HCT116 (cell line): ENCODE measurements at regions of chr20 and their contacts with region 1.

Region 1: DNA sequence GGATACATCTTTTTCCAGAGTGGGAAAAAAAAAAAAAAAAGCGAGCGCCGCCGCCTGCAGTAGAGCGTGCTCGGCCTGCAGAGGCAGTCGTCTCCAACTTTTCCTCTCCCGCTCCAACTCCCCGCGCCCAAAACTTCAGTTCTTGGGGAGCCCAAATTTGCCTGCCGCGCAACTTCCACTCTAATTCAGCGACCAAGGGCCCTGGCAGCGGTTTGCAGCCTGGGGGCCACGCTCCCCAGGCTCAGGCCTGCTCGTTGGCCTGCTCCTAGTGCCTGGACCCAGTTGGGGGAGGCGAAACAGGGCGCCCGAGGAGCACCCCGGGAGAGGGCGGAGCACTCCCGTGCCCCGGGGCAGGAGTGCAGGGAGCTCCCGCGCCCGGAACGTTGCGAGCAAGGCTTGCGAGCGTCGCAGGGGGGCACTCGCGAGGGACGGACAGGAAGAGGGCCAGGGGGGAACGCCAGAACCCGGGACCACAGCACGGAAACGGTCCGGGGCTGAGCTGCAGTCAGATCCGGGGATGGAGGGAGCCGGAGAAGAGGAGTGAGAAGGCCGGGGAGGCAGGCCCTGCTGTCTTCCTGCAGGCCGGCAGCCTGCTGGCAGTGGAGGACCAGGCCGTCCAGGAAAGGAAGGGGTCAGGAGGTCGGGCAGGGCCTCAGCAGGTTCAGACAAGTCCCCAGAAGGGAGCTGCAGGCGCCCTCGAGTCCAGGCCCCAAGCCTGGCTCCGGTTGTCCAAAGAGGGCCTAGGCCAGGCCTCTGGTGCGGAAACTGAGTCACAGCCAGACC is at the start of gene STX16:
- DNase-seq: peak; percentile 82
- ATAC-seq: peak; percentile 92
- H3K4me3 ChIP-seq: peak within 1 kb of the TSS; percentile 95 to 100
- H3K27ac ChIP-seq: peak within 1 kb of the TSS; percentile 77
- H3K4me1 ChIP-seq: peaks cover 3 to 12% of the 10 kb centered on the region in 2 experiments; a peak in 3 of 4 replicates
- H3K27me3 ChIP-seq: no peaks in the 10 kb centered on the region
- CTCF ChIP-seq: peak; percentile 52 to 76 (median 63)
- POLR2A ChIP-seq: no peak
- RAD21 ChIP-seq: peak; percentile 49
- total RNA-seq, gene STX16: 55.1 TPM

Region 2: GRCh38 chr20:58436868-58437645 is 213.9 kb before region 1 on chr20:
- CTCF ChIA-PET with region 1: no interaction called
- POLR2A ChIA-PET with region 1: no interaction called
- RAD21 ChIA-PET with region 1: no interaction called
- intact Hi-C with region 1: no loop called
- DNase-seq: no peak
- ATAC-seq: no peak
- H3K4me3 ChIP-seq: no peak overlapping the region
- H3K27ac ChIP-seq: no peak overlapping the region
- H3K4me1 ChIP-seq: no peaks in the 10 kb centered on the region
- H3K27me3 ChIP-seq: no peaks in the 10 kb centered on the region
- CTCF ChIP-seq: no peak
- POLR2A ChIP-seq: no peak
- RAD21 ChIP-seq: no peak

Region 3: GRCh38 chr20:58703264-58703663 is 52.3 kb after region 1 on chr20:
- CTCF ChIA-PET with region 1: no interaction called
- POLR2A ChIA-PET with region 1: no interaction called
- RAD21 ChIA-PET with region 1: no interaction called
- intact Hi-C with region 1: no loop called
- DNase-seq: no peak
- ATAC-seq: peak; percentile 55; the same call in 1 of the 2 replicates
- H3K4me3 ChIP-seq: no peak overlapping the region
- H3K27ac ChIP-seq: no peak overlapping the region
- H3K4me1 ChIP-seq: no peaks in the 10 kb centered on the region
- H3K27me3 ChIP-seq: no peaks in the 10 kb centered on the region
- CTCF ChIP-seq: peak in 2 of 3 experiments; percentile 59 to 60; a peak in 4 of 6 replicates
- POLR2A ChIP-seq: no peak
- RAD21 ChIP-seq: no peak

Region 4: DNA sequence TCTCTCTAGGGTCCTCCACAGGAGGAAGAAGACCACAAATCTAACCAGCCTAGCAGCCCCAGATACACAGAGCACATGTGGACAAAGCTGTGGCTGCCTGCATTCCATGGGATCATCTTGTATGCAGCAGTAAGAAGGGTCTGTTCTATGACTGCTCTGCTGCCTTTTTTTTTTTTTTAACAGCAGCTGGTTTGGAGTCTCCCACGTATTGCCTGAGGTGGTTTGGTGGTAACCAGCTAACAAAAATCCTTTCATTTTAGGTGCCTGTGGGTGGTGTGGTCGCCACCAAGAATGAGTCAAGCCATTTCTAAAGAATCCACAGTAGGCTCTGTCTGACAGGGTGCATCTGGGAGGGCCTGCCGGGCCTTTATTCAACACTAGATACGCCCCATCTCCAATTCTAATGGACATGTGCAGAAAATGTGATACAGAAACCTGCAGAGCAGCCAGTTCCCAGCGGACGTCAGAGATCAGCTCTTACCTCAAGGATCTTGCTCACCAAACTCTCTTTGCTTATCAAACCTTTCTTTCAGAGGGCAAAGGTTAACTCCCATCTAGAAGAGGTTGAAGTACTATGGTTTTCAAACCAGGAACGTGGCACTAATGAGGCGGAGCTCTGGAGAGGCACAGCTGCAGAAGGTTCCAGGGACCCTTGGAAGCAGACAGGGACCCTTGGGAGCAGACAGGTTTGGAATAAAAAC is 167.8 kb after region 1 on chr20:
- CTCF ChIA-PET with region 1: no interaction called
- POLR2A ChIA-PET with region 1: no interaction called
- RAD21 ChIA-PET with region 1: no interaction called
- intact Hi-C with region 1: no loop called
- DNase-seq: no peak
- ATAC-seq: no peak; the same call in 1 of the 2 replicates
- H3K4me3 ChIP-seq: no peak overlapping the region
- H3K27ac ChIP-seq: no peak overlapping the region
- H3K4me1 ChIP-seq: no peaks in the 10 kb centered on the region
- H3K27me3 ChIP-seq: no peaks in the 10 kb centered on the region
- CTCF ChIP-seq: no peak
- POLR2A ChIP-seq: no peak
- RAD21 ChIP-seq: no peak

Region 5: GRCh38 chr20:58888521-58889333 is 237.8 kb after region 1 on chr20:
- CTCF ChIA-PET with region 1: no interaction called
- POLR2A ChIA-PET with region 1: no interaction called
- RAD21 ChIA-PET with region 1: no interaction called
- intact Hi-C with region 1: loop called (anchors 10 kb)
- DNase-seq: no peak
- ATAC-seq: peak; percentile 64
- H3K4me3 ChIP-seq: peak overlapping the region; percentile 71
- H3K27ac ChIP-seq: peak overlapping the region; percentile 85
- H3K4me1 ChIP-seq: peaks cover 6 to 21% of the 10 kb centered on the region in 2 experiments
- H3K27me3 ChIP-seq: no peaks in the 10 kb centered on the region
- CTCF ChIP-seq: no peak
- POLR2A ChIP-seq: peak; percentile 97
- RAD21 ChIP-seq: no peak

Region 6: DNA sequence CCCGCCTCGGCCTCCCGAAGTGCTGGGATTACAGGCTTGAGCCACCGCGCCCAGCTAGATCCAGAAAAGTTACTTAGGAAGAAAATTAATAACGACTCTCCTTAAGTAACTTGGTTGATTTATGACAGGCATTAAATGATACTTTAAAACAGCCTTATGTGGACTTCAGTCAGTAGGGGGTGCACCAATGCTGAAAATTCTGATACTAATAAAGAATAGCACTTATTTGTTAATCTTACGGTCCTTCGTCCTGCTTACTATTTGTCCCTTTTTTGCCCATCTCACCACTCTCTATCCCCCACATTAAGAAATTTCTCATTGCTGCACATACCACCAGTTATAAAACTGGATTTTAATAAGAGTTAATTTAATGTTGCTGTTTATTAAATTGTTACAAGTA is 404.3 kb after region 1 on chr20:
- CTCF ChIA-PET with region 1: no interaction called
- POLR2A ChIA-PET with region 1: no interaction called
- RAD21 ChIA-PET with region 1: no interaction called
- intact Hi-C with region 1: loop called (anchors 10 kb)
- DNase-seq: no peak
- ATAC-seq: peak; percentile 69
- H3K4me3 ChIP-seq: no peak overlapping the region
- H3K27ac ChIP-seq: no peak overlapping the region
- H3K4me1 ChIP-seq: no peaks in the 10 kb centered on the region
- H3K27me3 ChIP-seq: peaks cover 12% of the 10 kb centered on the region; the same call in 1 of the 2 replicates
- CTCF ChIP-seq: peak; percentile 32 to 52 (median 49); a peak in 5 of 6 replicates
- POLR2A ChIP-seq: no peak
- RAD21 ChIP-seq: peak; percentile 52